ENCODE measurements at regions of chr9 and their contacts with region 1.

Region 1: DNA sequence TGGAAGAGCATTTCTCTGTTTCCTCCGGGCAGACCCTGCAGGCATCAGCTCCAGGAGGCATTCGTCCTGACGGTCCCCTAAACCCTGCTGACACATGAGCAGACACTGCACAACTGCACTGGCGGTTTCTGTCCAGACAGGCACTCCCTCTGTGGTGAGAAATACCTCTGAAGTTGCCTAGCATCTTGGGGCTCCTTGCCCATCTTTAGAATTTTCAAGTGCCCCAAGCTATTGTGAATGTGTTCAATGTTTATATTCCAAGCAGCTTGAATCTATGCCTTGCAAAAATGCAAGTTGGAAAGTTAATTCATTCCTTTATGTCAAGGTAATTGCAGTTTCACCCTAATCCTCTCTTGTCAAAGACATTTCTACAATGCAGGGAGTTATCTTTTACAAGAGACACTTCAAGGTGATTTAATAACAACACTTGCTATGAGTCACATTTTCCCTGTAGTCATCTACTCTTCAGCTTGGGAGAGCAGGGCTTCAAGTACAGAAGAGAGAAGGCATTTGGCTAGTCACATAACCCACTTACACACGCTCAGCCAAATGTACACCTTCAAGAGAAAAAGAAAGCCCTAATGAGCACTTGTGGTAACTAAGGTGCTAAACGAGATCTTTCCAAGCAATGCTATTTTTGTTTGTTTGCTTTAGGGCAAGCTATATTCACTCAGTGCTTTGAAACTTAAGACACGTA is 302.5 kb downstream of the MLLT3 start:
- DNase-seq: peak; percentile 30
- H3K4me3 Mint-ChIP-seq: no peak overlapping the region
- H3K27ac Mint-ChIP-seq: peak overlapping the region; percentile 81
- H3K4me1 Mint-ChIP-seq: peaks cover 78% of the 10 kb centered on the region
- H3K27me3 Mint-ChIP-seq: no peaks in the 10 kb centered on the region

Region 2: GRCh38 chr9:20331095-20331685 is 11.4 kb after region 1 on chr9:
- CTCF ChIA-PET with region 1: interaction called, 14 read pairs
- POLR2A ChIA-PET with region 1: interaction called, 14 read pairs
- DNase-seq: no peak
- H3K4me3 Mint-ChIP-seq: no peak overlapping the region
- H3K27ac Mint-ChIP-seq: peak overlapping the region; percentile 47
- H3K4me1 Mint-ChIP-seq: peaks cover 36% of the 10 kb centered on the region
- H3K27me3 Mint-ChIP-seq: no peaks in the 10 kb centered on the region